HEK293 (cell line): ENCODE measurements at regions of chr22 and their contacts with region 1.

Region 1: DNA sequence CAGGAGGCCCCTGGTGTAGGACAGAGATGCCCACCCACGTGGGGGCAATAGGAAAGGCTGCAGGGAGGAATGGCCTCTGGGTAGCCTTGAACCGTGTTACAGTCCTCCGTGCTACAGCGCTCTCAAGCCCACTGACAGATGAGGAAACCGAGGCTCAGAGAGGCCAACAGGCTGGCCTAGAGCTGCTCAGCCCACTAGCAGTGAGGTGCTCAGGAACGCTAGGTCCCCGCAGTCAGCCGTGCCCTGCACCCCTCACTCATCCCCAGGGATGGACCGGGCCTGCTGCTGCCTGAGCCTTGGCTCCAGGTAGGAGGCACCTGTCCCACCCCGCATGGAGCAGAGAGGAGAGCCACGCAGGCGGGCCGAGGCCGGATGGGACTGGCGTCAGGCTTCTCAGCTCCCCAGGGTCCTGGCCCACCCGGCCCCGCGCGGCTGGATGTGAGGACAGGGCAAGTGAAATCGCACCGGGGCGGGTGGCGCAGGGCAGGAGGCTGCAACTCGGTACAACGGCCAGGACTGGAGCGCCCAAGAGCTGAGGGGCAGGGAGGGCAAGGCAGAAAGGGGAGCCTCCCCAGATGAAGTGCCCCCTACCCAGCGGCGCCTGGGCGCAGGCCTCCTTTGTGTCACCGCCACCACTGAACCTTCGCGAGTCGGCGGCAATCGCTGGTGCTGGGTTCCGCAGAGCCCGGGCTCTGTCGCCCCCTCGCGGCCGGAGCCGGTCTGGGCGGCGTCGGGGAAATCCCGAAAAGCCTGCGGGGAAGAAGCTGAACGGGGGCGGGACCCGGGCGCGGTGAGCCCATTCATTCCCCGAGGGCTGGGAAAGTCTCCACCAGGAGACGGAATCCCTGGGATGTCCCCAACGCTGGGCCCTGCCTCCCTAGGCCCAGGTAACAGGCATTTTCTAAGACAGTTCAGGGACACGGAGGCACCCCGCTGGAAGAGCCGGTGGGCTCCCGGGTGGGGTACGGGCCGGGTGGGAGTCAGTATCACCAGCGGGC is 8.4 kb upstream of the SLC2A11 start:
- H3K4me3 ChIP-seq: no peak overlapping the region
- H3K27ac ChIP-seq: no peak overlapping the region
- H3K4me1 ChIP-seq: no peaks in the 10 kb centered on the region
- CTCF ChIP-seq: peak; percentile 97

Region 2: GRCh38 chr22:23767673-23768548 is 81.4 kb before region 1 on chr22 and contains the start of gene CHCHD10:
- CTCF ChIA-PET with region 1: interaction called, 34 read pairs
- POLR2A ChIA-PET with region 1: interaction called, 3 read pairs
- H3K4me3 ChIP-seq: peak within 1 kb of the TSS; percentile 68
- H3K27ac ChIP-seq: peak within 1 kb of the TSS; percentile 50
- H3K4me1 ChIP-seq: peaks cover 3% of the 10 kb centered on the region
- CTCF ChIP-seq: peak; percentile 93

Region 3: DNA sequence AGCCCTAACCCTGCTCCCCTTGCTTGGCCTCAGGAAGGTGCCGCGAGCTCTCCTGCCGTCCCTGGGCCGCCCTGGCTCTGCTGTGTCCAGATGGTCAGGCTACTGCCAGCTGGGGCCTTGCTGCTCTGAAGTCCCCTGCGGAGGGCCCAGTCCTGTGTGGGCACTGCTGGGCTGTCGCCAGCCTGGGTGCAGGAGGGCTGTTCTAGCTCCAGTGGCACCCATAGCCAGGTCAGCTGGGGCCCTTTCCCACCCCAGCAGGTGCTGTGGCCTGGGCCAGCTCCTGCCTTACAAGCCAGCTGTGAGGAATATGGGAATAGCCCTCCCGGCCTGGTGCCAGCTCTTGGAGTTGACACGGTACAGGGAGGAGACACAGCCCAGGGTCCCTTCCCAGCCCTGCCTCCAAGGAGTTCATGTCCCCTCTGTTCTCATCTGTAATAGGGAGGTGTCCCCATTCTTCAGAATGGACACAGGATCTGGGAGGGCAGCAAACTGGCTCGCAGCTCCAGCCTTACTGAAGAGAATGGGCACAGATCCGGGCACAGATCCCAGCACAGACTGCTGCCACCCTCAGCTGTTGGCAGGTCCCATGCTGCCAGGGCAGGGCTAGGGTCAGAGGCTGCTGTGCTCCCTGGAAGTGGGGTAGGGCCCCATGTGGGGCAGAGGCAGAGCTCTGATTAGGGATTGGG is 14.4 kb before region 1 on chr22:
- CTCF ChIA-PET with region 1: interaction called, 11 read pairs
- POLR2A ChIA-PET with region 1: no interaction called
- H3K4me3 ChIP-seq: no peak overlapping the region
- H3K27ac ChIP-seq: 0 out of 2 replicates have a peak overlapping the region, but pooled peaks have one; percentile 19
- H3K4me1 ChIP-seq: no peaks in the 10 kb centered on the region
- CTCF ChIP-seq: no peak

Region 4: GRCh38 chr22:23868580-23868979 is 19.3 kb after region 1 on chr22:
- CTCF ChIA-PET with region 1: interaction called, 24 read pairs
- POLR2A ChIA-PET with region 1: no interaction called
- H3K4me3 ChIP-seq: no peak overlapping the region
- H3K27ac ChIP-seq: no peak overlapping the region
- H3K4me1 ChIP-seq: no peaks in the 10 kb centered on the region
- CTCF ChIP-seq: no peak